ENCODE measurements at regions of chr10 and their contacts with region 1.

Region 1: DNA sequence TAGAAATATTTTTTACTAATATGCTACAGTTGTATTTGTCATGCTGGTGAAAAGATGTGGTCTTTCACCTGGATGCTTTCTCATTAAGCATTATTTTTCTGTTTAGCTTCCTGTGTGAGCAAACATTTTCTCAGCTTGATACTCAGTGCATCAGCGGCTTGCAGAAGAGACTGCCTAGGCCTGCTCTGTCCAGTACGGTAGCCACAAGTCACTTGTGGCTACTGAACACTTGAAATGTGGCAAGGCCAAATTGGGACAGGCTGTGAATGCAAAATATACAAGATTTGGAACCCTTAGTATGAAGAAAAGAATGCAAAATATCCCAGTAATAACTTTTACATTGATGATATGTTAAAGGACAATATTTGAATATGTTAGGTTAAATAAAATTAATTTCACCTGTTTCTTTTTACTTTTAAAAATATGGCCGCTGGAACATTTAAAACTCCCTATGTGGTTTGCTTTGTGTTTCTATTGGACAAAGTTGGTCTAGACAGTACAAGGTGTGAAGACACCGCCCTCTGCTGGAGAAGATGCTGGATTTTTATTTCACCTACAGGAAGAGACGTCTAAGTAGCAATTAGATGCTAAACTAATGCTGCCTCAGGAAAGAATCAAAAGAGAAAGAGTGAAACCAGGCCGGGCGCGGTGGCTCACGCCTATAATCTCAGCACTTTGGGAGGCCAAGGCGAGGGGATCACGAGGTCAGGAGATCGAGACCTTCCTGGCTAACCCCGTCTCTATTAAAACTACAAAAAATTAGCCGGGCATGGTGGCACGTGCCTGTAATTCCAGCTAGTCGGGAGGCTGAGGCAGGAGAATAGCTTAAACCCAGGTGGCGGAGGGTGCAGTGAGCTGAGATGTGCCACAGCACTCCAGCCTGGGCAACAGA is 5.3 kb downstream of the SRGN start:
- DNase-seq: peak; percentile 59
- CTCF ChIP-seq: peak; percentile 59

Region 2: DNA sequence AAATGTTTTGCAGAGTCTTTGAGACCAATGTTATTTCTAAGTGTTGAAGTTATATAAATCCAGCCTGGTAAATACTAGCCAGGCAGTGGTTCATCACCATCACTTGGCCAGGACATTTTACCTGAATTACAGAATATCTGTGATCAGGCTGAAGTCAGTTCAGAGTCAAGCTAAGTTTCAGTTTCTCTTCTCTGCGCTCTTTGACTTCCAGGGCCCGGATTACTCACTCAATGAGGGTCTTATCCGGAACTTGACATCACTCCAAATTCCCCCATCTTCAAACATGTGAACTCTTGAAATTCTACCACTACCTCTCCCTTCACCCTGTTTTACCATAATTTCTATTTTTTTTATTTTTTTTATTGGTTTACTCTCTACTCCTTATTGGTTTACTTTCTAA is 408.8 kb before region 1 on chr10:
- in situ Hi-C with region 1: no loop called
- DNase-seq: peak; percentile 64
- CTCF ChIP-seq: no peak

Region 3: DNA sequence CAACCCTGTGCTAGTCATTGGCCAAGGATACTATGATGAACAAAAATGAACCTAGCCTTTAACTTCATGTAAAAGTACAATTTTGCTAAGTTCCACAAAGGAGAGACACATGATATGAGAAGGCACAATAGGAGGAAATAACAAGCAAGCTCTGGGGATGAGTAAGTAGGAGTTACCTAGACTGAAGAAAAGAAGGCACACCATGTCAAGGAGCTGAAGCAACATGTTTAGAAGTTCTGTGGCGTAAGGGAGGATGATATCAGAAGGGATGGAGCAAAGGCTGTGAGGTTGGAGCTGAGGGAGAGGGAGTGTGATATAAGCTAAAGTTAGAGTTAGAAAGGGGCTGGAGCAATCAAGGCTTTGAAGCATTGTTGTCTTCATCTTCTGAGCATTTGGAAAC is 79.0 kb before region 1 on chr10:
- in situ Hi-C with region 1: loop called (anchors 5 kb)
- DNase-seq: no peak
- CTCF ChIP-seq: no peak

Region 4: GRCh38 chr10:69237528-69238159 is 144.4 kb after region 1 on chr10:
- in situ Hi-C with region 1: no loop called
- DNase-seq: peak; percentile 90
- CTCF ChIP-seq: peak; percentile 91

Region 5: GRCh38 chr10:69269761-69270160 is 176.6 kb after region 1 on chr10:
- in situ Hi-C with region 1: no loop called
- DNase-seq: no peak
- CTCF ChIP-seq: no peak

Measured in GM13976 (cell line).